Activated CD4-positive, alpha-beta memory T cell treated with anti-CD3 and anti-CD28 coated beads for 36 hours (primary cell): ENCODE measurements at regions of chr2 and their contacts with region 1.

Region 1: DNA sequence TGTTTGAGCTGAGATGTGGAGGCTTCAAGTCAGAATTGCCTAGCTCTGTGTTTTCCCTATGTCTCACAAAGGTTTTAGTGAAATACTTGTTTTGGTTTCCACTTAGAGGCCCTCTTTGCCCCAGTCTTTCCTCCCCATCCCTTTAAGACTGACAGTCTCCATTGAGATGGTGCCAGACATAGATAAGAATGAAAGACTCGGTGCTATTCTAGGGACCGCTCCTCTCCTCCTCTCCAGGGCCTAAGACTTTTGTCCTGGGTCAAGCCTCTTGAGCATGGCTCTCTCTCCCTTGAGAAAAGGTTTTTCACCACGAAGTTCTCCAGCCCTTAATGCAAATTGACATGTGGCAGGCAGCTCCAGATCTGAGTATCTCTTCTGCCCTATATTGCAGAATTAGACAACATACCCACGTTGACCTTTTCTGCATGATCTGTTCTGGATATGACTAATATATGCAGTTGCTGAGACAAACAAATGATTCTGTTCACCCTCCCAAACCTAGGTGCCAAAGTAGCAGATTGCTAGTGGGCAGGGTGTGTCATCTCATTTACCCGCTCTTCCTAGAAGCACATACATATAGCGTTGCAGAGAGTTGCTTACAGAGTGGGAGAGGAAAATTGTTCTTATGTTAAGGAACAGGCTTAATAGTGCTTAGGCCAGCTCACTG is 47.5 kb upstream of the ACSL3 start:
- DNase-seq: peak; percentile 57
- H3K4me3 Mint-ChIP-seq: peak overlapping the region; percentile 20
- H3K27ac Mint-ChIP-seq: peak overlapping the region; percentile 90
- H3K4me1 Mint-ChIP-seq: peaks cover 19% of the 10 kb centered on the region
- H3K27me3 Mint-ChIP-seq: peaks cover 8% of the 10 kb centered on the region

Region 2: DNA sequence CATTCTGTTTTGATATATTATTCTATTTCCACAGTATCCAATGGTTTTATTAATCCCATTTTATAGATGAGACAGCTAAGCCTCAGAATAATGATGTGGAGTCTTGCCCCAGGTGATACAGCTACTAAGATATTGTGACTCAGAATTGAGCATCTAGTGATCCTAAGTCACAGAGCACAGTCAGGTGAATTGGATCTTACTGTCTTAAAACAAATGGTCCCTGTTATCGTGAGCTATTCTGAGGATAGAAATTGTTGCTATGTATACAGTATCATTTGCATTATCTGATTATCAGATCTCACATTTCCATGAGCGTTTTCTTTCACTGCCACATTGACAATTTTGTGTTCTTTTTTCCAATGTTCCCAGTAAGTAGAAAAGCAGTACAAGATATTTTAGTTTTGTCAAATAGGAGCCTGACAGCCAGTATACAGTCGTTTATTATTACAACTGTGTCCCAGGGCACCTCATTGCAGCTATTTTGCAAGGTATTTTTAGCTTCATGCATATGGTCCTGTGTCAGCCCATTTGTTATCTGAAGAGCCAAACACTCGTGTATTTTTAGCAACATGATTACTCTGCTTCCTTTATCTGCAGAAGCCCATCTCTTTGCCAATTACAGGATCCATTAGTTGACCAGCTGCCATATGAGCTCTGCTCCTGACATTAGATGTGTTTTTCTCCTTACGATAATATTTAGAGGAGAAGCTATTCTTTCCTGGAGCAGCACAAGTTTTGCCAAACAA is 414.1 kb before region 1 on chr2:
- CTCF ChIA-PET with region 1: no interaction called
- POLR2A ChIA-PET with region 1: no interaction called
- intact Hi-C with region 1: no loop called
- DNase-seq: no peak
- H3K4me3 Mint-ChIP-seq: no peak overlapping the region
- H3K27ac Mint-ChIP-seq: no peak overlapping the region
- H3K4me1 Mint-ChIP-seq: no peaks in the 10 kb centered on the region
- H3K27me3 Mint-ChIP-seq: peaks cover 2% of the 10 kb centered on the region

Region 3: GRCh38 chr2:222424729-222425671 is 388.3 kb before region 1 on chr2:
- CTCF ChIA-PET with region 1: no interaction called
- POLR2A ChIA-PET with region 1: no interaction called
- intact Hi-C with region 1: loop called (anchors 10 kb)
- DNase-seq: peak; percentile 72
- H3K4me3 Mint-ChIP-seq: peak overlapping the region; percentile 90
- H3K27ac Mint-ChIP-seq: peak overlapping the region; percentile 85
- H3K4me1 Mint-ChIP-seq: peaks cover 61% of the 10 kb centered on the region
- H3K27me3 Mint-ChIP-seq: peaks cover 7% of the 10 kb centered on the region

Region 4: DNA sequence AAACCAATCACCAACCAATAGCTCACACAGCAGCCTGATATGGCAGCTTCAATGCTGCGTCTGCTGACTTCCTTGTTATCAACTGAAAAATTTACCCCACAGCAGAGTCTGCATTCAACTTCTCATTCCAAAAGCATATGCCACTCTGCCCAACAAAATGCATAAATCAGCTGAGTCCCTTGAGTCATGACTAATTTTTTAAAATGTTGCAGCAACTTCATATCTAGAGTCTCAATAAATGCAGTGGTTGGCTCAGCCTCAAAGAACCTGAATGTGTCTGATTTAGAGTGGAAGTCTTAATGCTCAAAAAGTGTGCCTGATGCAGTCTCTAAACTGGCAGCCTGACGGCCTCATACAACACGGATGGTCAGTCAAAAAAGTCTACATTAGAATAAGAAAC is 203.9 kb before region 1 on chr2:
- CTCF ChIA-PET with region 1: no interaction called
- POLR2A ChIA-PET with region 1: no interaction called
- intact Hi-C with region 1: no loop called
- DNase-seq: no peak
- H3K4me3 Mint-ChIP-seq: no peak overlapping the region
- H3K27ac Mint-ChIP-seq: no peak overlapping the region
- H3K4me1 Mint-ChIP-seq: no peaks in the 10 kb centered on the region
- H3K27me3 Mint-ChIP-seq: no peaks in the 10 kb centered on the region

Region 5: DNA sequence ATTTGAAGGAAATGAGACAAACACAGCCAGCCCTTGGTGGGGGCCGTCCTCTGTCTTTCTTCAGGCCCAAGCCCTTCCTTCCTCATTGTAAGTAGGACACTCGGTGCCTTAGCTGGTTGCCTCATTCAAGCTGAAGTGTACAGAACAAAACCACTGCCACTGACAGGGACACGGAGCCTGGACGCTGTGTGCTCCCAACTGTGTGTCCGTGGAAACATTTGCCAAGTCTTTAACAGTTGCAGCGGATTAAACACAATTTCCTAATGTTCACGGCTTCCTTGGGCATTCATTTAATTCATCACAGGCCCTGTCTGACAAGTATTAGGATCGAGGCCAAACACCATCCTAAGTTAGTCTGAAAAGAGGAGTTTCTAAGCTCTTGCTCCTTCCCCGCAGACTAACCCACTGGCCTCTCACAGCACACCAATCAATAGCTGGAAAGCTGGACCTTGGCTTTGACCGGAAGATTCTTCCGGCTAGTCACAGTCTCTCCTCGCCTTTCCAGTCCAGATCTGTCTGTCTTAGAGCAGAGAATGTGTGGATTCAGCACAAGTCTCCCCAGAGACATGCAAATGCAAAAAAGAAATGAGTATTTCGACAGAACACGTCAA is 21.2 kb before region 1 on chr2:
- CTCF ChIA-PET with region 1: no interaction called
- POLR2A ChIA-PET with region 1: interaction called, 4 read pairs
- intact Hi-C with region 1: loop called (anchors 1 kb)
- DNase-seq: no peak
- H3K4me3 Mint-ChIP-seq: no peak overlapping the region
- H3K27ac Mint-ChIP-seq: no peak overlapping the region
- H3K4me1 Mint-ChIP-seq: peaks cover 12% of the 10 kb centered on the region
- H3K27me3 Mint-ChIP-seq: no peaks in the 10 kb centered on the region

Region 6: GRCh38 chr2:222844323-222844722 is 31.0 kb after region 1 on chr2:
- CTCF ChIA-PET with region 1: no interaction called
- POLR2A ChIA-PET with region 1: no interaction called
- intact Hi-C with region 1: loop called (anchors 1 kb)
- DNase-seq: no peak
- H3K4me3 Mint-ChIP-seq: no peak overlapping the region
- H3K27ac Mint-ChIP-seq: no peak overlapping the region
- H3K4me1 Mint-ChIP-seq: peaks cover 2% of the 10 kb centered on the region
- H3K27me3 Mint-ChIP-seq: peaks cover 24% of the 10 kb centered on the region

Region 7: GRCh38 chr2:222903234-222904220 is 90.2 kb after region 1 on chr2:
- CTCF ChIA-PET with region 1: interaction called, 3 read pairs
- POLR2A ChIA-PET with region 1: no interaction called
- intact Hi-C with region 1: loop called (anchors 1 kb)
- DNase-seq: peak; percentile 34
- H3K4me3 Mint-ChIP-seq: no peak overlapping the region
- H3K27ac Mint-ChIP-seq: no peak overlapping the region
- H3K4me1 Mint-ChIP-seq: peaks cover 13% of the 10 kb centered on the region
- H3K27me3 Mint-ChIP-seq: no peaks in the 10 kb centered on the region